ENCODE measurements at regions of chr13 and their contacts with region 1.

Region 1: GRCh38 chr13:52975969-52976368 is 52.6 kb upstream of the OLFM4 start:
- DNase-seq: no peak
- ATAC-seq: no peak
- H3K4me3 ChIP-seq: no peak overlapping the region
- H3K27ac ChIP-seq: no peak overlapping the region
- H3K4me1 ChIP-seq: no peaks in the 10 kb centered on the region
- H3K27me3 ChIP-seq: peaks cover 0 to 19% (median 4%) of the 10 kb centered on the region in 7 donors
- CTCF ChIP-seq: no peak

Region 2: DNA sequence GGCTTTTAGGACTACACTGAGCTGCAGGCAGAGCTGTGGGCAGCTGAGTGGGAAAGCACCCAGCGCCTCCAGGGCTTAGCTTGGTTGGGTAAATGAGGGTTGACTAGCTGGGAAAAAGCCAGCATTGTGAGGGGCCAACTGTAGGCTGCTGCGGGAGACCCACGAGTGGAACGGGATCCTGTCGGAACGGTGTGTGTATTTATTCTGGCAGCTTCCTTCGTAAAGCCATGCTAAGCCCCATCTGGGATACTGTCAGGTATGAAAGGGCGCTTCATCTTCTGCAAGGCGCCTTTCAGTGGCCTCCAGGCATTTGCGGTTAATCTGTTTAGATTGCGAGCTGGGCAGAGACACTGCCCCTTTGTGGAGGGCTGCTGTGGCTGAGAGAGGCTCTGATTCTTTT is 196.9 kb before region 1 on chr13:
- intact Hi-C with region 1: no loop called
- DNase-seq: no peak
- ATAC-seq: no peak
- H3K4me3 ChIP-seq: no peak overlapping the region
- H3K27ac ChIP-seq: no peak overlapping the region
- H3K4me1 ChIP-seq: no peaks in the 10 kb centered on the region
- H3K27me3 ChIP-seq: peaks cover 0 to 36% (median 15%) of the 10 kb centered on the region in 7 donors
- CTCF ChIP-seq: no peak

Region 3: GRCh38 chr13:52879950-52880741 is 95.8 kb before region 1 on chr13:
- intact Hi-C with region 1: no loop called
- DNase-seq: no peak
- ATAC-seq: no peak
- H3K4me3 ChIP-seq: no peak overlapping the region
- H3K27ac ChIP-seq: no peak overlapping the region
- H3K4me1 ChIP-seq: no peaks in the 10 kb centered on the region
- H3K27me3 ChIP-seq: peaks cover 0 to 40% (median 11%) of the 10 kb centered on the region in 7 donors
- CTCF ChIP-seq: no peak

Region 4: GRCh38 chr13:52929846-52930245 is 46.1 kb before region 1 on chr13:
- intact Hi-C with region 1: loop called in 1 of 10 experiments (anchors 1 kb)
- DNase-seq: no peak
- ATAC-seq: no peak
- H3K4me3 ChIP-seq: no peak overlapping the region
- H3K27ac ChIP-seq: no peak overlapping the region
- H3K4me1 ChIP-seq: peaks cover 0 to 12% (median 4%) of the 10 kb centered on the region in 9 donors
- H3K27me3 ChIP-seq: peaks cover 0 to 17% (median 5%) of the 10 kb centered on the region in 7 donors
- CTCF ChIP-seq: no peak

Region 5: DNA sequence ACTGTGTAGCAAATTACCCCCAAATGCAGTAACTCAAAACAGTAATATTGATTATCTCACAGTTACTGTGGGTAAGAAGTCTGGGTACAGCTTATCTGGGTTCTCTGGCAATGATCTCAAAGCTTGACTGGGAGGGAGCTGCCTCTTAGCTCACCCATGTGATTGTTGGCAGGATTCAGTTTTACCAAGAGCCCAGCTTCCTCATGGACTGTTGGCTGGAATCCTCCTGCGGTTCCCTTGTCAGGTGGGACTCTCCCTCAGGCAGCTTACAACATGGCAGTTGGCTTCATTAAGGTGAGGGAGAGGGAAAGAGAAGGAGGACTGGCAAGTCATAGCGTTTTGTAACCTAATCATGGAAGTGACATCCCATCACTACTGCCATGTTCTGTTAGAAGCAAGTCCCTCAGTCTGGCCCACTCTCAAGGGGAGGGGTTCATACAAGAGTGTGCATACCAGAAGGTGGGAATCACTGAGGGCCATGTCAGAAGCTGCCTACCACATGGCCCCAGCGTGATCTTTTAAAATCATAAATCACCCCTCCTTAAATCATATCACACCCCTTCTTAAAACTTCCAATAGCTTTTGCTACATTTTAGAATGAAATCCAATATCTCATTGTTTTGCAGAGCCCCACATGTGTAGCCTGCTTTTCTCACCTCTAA is 160.7 kb after region 1 on chr13:
- intact Hi-C with region 1: no loop called
- DNase-seq: no peak
- ATAC-seq: no peak
- H3K4me3 ChIP-seq: no peak overlapping the region
- H3K27ac ChIP-seq: no peak overlapping the region
- H3K4me1 ChIP-seq: peaks cover 0 to 8% (median 0%) of the 10 kb centered on the region in 9 donors
- H3K27me3 ChIP-seq: peaks cover 0 to 53% (median 0%) of the 10 kb centered on the region in 7 donors
- CTCF ChIP-seq: no peak

Region 6: GRCh38 chr13:53200498-53201453 is 224.8 kb after region 1 on chr13:
- intact Hi-C with region 1: no loop called
- DNase-seq: peak; percentile 13 to 48
- ATAC-seq: peak in 4 of 8 donors; percentile 37 to 84 (median 64)
- H3K4me3 ChIP-seq: no peak overlapping the region
- H3K27ac ChIP-seq: no peak overlapping the region
- H3K4me1 ChIP-seq: no peaks in the 10 kb centered on the region
- H3K27me3 ChIP-seq: peaks cover 7 to 54% (median 48%) of the 10 kb centered on the region in 7 donors
- CTCF ChIP-seq: peak in 8 of 9 donors; percentile 32 to 64 (median 51)